ENCODE measurements at regions of chr15 and their contacts with region 1.

Region 1: DNA sequence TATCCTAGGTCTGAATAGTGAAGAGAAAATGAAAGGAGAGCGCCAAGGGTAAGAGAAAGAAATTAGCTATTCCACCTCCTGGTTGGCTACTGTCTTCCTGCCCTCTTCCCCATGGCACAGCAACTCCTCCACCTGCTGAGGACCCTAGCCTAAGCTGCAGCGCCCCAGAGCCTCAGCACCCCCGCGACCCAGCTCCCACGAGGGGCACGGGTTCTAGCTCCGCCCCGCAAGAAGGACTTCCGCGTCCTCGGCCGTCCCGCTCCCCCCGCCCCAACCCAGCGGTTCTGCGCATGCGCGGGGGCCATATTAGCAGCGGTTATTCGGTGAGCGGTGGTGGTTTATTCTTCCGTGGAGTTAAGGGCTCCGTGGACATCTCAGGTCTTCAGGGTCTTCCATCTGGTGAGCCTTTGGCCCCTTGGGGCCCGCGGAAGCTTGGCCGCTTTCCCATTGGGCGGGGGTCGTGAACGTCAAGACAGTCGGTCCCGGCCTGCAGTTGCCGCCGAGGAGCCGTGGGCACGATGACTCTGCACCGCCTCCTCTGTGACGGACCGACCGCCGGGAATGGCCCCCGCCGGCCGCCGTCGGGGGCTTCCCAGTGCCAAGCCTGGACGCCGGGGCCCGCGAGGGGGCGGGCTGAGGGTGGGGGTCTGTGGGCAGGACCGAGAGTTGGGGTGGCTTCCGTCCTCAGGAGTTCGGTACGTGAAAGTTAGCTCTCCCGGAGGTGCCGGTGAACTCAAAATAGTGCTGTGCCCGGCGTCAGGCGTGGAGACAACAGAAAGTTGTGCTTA is at the start of gene PSMA4:
- DNase-seq: peak; percentile 87 to 96 (median 93)
- ATAC-seq: peak; percentile 84
- H3K4me3 ChIP-seq: peak within 1 kb of the TSS; percentile 77
- H3K4me3 Mint-ChIP-seq: peak within 1 kb of the TSS; percentile 93
- H3K27ac ChIP-seq: peak within 1 kb of the TSS; percentile 92 to 97
- H3K27ac Mint-ChIP-seq: peak within 1 kb of the TSS; percentile 99
- H3K4me1 ChIP-seq: peaks cover 30% of the 10 kb centered on the region
- H3K4me1 Mint-ChIP-seq: peaks cover 33% of the 10 kb centered on the region
- H3K27me3 ChIP-seq: no peaks in the 10 kb centered on the region
- H3K27me3 Mint-ChIP-seq: no peaks in the 10 kb centered on the region
- CTCF ChIP-seq: no peak
- total RNA-seq, gene PSMA4: 65.5 to 66.4 TPM

Region 2: DNA sequence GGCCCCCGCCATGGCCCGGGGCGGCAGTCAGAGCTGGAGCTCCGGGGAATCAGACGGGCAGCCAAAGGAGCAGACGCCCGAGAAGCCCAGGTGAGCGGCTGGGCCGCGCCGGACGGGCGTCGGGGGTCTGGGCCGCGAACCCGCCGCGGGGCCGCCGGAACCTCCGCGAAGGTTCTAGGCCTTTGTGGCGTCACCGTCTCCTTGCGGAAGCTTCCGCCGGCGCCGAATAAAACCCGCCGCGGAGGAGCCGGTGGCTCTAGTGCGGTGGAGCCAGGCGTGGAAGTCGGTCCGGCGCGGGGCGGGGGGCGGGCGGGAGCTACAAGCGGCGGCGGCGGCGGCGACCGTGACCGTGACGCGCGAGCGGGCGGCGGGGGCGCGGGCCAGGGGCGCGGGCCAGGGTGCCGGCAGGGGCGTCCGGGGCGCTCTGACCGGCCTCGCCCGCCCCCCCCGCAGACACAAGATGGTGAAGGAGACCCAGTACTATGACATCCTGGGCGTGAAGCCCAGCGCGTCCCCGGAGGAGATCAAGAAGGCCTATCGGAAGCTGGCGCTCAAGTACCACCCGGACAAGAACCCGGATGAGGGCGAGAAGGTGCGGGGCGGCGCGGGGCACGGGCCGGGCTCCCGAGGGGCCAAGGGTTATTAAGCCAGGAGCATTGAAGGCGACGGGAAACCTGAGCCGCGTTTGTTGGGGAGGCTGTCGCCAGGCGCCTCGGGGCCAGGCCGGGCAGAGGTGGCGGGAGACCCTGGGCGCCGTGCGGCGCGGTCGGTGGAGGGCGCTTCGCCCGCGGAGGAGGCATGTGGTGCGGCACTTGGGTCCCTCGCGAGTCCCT is 275.8 kb before region 1 on chr15 and contains the start of gene DNAJA4:
- CTCF ChIA-PET with region 1: no interaction called
- POLR2A ChIA-PET with region 1: interaction called, 15 read pairs
- intact Hi-C with region 1: no loop called
- DNase-seq: peak; percentile 39 to 86 (median 61)
- ATAC-seq: peak; percentile 77
- H3K4me3 ChIP-seq: peak within 1 kb of the TSS; percentile 70
- H3K4me3 Mint-ChIP-seq: peak within 1 kb of the TSS; percentile 89
- H3K27ac ChIP-seq: peak within 1 kb of the TSS; percentile 54 to 62
- H3K27ac Mint-ChIP-seq: peak within 1 kb of the TSS; percentile 94
- H3K4me1 ChIP-seq: peaks cover 27% of the 10 kb centered on the region
- H3K4me1 Mint-ChIP-seq: peaks cover 36% of the 10 kb centered on the region
- H3K27me3 ChIP-seq: no peaks in the 10 kb centered on the region
- H3K27me3 Mint-ChIP-seq: no peaks in the 10 kb centered on the region
- CTCF ChIP-seq: peak; percentile 27
- total RNA-seq, gene DNAJA4: 47.0 to 48.5 TPM

Region 3: GRCh38 chr15:78308422-78309032 is 231.8 kb before region 1 on chr15:
- CTCF ChIA-PET with region 1: no interaction called
- POLR2A ChIA-PET with region 1: no interaction called
- intact Hi-C with region 1: loop called in 1 of 2 experiments (anchors 10 kb)
- DNase-seq: peak in 12 of 14 experiments; percentile 6 to 61 (median 28)
- ATAC-seq: peak; percentile 68
- H3K4me3 ChIP-seq: no peak overlapping the region
- H3K4me3 Mint-ChIP-seq: no peak overlapping the region
- H3K27ac ChIP-seq: no peak overlapping the region
- H3K27ac Mint-ChIP-seq: no peak overlapping the region
- H3K4me1 ChIP-seq: no peaks in the 10 kb centered on the region
- H3K4me1 Mint-ChIP-seq: no peaks in the 10 kb centered on the region
- H3K27me3 ChIP-seq: peaks cover 0 to 9% of the 10 kb centered on the region in 2 experiments
- H3K27me3 Mint-ChIP-seq: peaks cover 13% of the 10 kb centered on the region
- CTCF ChIP-seq: no peak

Region 4: DNA sequence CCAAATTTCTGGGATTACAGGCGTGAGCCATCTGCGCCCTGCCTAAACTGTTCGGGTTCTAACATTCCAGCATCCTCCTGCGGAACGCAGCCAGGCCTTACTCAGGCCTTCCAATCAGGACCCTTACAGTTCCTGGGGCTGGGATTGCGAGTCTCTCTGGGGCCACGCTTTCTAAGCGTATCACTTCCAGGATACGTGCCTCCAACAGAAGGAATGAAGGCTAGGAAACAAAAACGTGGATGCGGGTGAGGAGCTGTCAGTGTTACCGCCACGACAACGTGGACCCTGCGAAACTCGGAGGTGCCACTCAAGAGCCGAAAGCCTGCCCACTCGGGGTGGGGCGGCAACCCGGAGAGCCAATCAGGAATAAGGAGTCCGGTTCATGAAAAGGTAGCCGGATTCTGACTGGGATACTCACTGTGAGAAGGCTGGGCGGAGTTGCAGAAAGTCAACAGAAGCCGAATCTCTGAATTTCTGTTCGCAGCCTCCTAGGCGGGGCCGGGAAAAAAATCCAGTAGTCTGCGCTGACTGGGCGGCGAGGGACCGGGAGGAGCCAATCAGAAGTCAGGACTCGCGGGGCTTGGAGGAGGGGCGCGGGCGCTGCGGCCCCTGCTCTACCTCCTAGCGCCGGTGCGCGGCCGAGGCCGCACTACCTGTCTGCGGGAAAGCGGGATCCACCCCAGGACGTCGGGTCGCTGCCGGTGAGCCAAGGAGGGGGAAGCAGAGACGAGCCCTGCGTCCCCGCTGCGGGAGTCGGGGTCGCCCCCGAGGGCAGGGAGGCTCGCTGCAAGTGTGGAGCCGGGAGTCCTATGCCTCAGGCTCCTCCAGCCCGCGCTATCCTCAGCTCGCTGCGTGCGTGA is 33.1 kb before region 1 on chr15 and contains the start of gene HYKK:
- CTCF ChIA-PET with region 1: no interaction called
- POLR2A ChIA-PET with region 1: interaction called, 27 read pairs
- intact Hi-C with region 1: loop called (anchors 1 to 2 kb)
- DNase-seq: peak; percentile 33 to 87 (median 70)
- ATAC-seq: peak; percentile 84
- H3K4me3 ChIP-seq: peak within 1 kb of the TSS; percentile 75
- H3K4me3 Mint-ChIP-seq: peak within 1 kb of the TSS; percentile 93
- H3K27ac ChIP-seq: no peak within 1 kb of the TSS
- H3K27ac Mint-ChIP-seq: peak within 1 kb of the TSS; percentile 69
- H3K4me1 ChIP-seq: peaks cover 23% of the 10 kb centered on the region
- H3K4me1 Mint-ChIP-seq: peaks cover 36% of the 10 kb centered on the region
- H3K27me3 ChIP-seq: no peaks in the 10 kb centered on the region
- H3K27me3 Mint-ChIP-seq: no peaks in the 10 kb centered on the region
- CTCF ChIP-seq: no peak
- total RNA-seq, gene HYKK: 1.8 to 2.3 TPM

Region 5: DNA sequence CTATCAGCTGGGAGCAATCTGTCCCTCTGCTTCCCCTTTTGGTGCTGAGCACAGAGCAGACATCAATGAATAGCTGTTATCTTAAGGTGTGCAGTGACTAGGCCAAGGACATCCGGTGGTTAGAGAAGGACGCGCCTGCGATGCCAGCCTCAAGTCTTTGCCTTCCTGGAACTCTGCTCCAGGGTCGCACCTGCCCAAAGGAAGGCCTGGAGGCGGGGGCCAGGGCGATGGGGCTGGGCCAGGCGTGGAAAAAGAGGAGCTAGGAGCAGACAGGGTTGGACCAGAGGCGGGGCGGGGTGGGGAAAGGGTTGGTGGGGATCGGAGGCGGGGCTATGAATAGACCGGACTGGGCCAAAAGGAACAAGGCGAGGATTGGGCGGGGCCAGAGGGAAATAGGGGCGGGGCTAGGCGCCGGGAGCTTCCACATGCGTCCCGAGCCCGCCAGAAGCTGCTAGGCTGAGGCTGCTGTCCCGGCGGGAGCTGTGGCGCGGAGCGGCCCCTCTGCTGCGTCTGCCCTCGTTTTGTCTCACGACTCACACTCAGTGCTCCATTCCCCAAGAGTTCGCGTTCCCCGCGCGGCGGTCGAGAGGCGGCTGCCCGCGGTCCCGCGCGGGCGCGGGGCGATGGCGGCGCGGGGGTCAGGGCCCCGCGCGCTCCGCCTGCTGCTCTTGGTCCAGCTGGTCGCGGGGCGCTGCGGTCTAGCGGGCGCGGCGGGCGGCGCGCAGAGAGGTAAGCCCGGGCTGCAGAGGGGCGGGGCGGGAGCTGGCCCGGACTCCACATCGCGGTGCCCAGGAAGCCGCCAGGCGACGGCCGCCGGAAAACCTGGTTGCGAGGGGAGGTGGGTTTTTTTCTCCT is 25.0 kb after region 1 on chr15 and contains the start of gene CHRNA5:
- CTCF ChIA-PET with region 1: no interaction called
- POLR2A ChIA-PET with region 1: interaction called, 33 read pairs
- intact Hi-C with region 1: loop called (anchors 1 to 2 kb)
- DNase-seq: peak; percentile 14 to 78 (median 52)
- ATAC-seq: peak; percentile 70
- H3K4me3 ChIP-seq: peak within 1 kb of the TSS; percentile 67
- H3K4me3 Mint-ChIP-seq: peak within 1 kb of the TSS; percentile 96
- H3K27ac ChIP-seq: no peak within 1 kb of the TSS
- H3K27ac Mint-ChIP-seq: no peak within 1 kb of the TSS
- H3K4me1 ChIP-seq: peaks cover 18% of the 10 kb centered on the region
- H3K4me1 Mint-ChIP-seq: peaks cover 21% of the 10 kb centered on the region
- H3K27me3 ChIP-seq: no peaks in the 10 kb centered on the region
- H3K27me3 Mint-ChIP-seq: peaks cover 16% of the 10 kb centered on the region
- CTCF ChIP-seq: no peak
- total RNA-seq, gene CHRNA5: 0.25 TPM

Region 6: DNA sequence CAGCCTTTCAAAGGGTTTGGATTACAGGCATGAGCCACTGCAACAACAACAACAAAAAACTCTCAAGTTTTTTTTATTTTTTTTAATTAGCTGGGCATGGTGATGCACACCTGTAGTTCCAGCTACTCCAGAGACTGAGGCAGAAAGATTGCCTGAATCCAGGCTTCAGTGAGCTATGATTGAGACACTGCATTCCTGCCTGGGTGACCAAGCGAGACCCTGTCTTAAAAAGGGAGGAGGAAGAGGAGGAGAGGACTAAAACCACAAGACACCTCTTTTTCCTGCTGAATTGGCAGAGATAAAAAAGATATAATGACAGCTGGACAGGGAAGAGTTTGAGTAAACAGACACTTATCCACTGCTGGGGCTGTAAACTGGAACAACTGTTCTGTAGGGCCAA is 123.4 kb after region 1 on chr15:
- CTCF ChIA-PET with region 1: no interaction called
- POLR2A ChIA-PET with region 1: no interaction called
- intact Hi-C with region 1: no loop called
- DNase-seq: no peak
- ATAC-seq: no peak
- H3K4me3 ChIP-seq: no peak overlapping the region
- H3K4me3 Mint-ChIP-seq: no peak overlapping the region
- H3K27ac ChIP-seq: no peak overlapping the region
- H3K27ac Mint-ChIP-seq: no peak overlapping the region
- H3K4me1 ChIP-seq: no peaks in the 10 kb centered on the region
- H3K4me1 Mint-ChIP-seq: no peaks in the 10 kb centered on the region
- H3K27me3 ChIP-seq: peaks cover 0 to 4% of the 10 kb centered on the region in 2 experiments
- H3K27me3 Mint-ChIP-seq: peaks cover 10% of the 10 kb centered on the region
- CTCF ChIP-seq: no peak

Region 7: DNA sequence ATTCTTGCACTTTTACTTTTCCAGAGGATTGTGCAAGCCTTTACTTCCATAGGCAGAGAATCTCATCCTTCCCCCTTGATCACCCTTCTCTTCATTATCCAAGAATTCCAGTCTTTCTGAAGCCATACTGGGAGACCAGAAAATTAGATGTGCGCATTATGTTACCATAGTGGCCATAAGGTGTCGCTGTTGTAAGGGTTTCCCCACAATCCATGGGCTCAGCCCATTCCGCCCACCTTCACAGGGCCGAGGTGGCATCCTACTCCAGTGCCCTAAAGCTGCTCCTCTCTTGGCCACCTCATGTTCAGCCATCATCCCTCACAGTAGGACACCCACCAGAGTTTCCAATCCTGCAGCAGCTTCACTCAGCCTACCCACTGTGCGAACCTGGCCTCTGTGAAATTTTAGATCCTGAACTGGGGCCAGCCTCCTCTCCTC is 369.5 kb after region 1 on chr15:
- CTCF ChIA-PET with region 1: no interaction called
- POLR2A ChIA-PET with region 1: no interaction called
- intact Hi-C with region 1: loop called in 1 of 2 experiments (anchors 10 kb)
- DNase-seq: peak in 4 of 14 experiments; percentile 19 to 68 (median 51)
- ATAC-seq: peak; percentile 52
- H3K4me3 ChIP-seq: no peak overlapping the region
- H3K4me3 Mint-ChIP-seq: no peak overlapping the region
- H3K27ac ChIP-seq: no peak overlapping the region
- H3K27ac Mint-ChIP-seq: peak overlapping the region; percentile 10
- H3K4me1 ChIP-seq: peaks cover 13% of the 10 kb centered on the region
- H3K4me1 Mint-ChIP-seq: peaks cover 31% of the 10 kb centered on the region
- H3K27me3 ChIP-seq: no peaks in the 10 kb centered on the region
- H3K27me3 Mint-ChIP-seq: no peaks in the 10 kb centered on the region
- CTCF ChIP-seq: peak; percentile 41

Measured in CD4-positive, alpha-beta T cell (primary cell).